ENCODE measurements at regions of chr17 and their contacts with region 1.

Region 1: DNA sequence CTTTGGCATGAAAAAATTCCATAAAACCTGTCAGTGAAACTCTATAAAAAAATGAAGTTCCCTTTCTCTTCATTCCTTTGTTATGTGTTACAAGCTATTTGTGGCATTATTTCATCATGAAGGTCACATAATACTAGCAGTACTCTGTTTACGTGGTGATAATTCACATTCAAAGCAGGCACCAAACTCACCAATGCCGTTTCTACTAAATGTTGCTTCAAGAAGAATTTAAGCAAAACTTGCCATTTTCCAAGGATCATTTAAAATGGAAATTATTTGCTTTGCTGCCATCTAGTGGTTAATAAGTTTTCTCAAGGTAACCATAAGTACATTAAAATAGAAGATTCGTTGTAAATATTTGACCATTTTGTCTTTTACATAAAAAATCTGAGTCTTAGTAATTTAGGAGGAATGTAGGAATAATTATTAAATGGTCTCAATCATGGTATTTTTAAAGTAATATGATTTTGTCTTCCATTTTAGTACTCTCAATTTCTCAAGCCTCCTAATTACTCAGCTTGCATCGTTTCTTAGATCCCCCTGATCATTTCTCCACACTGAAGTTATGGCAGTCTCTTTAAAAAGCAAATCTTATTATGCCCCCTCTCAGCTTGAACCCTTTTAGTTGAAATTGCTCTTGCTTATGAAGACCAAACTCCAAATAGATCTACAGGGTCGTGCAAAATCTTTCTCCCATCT is 80.8 kb downstream of the OMG start:
- H3K4me3 ChIP-seq: no peak overlapping the region
- H3K27ac ChIP-seq: no peak overlapping the region
- H3K4me1 ChIP-seq: no peaks in the 10 kb centered on the region
- CTCF ChIP-seq: no peak

Region 2: DNA sequence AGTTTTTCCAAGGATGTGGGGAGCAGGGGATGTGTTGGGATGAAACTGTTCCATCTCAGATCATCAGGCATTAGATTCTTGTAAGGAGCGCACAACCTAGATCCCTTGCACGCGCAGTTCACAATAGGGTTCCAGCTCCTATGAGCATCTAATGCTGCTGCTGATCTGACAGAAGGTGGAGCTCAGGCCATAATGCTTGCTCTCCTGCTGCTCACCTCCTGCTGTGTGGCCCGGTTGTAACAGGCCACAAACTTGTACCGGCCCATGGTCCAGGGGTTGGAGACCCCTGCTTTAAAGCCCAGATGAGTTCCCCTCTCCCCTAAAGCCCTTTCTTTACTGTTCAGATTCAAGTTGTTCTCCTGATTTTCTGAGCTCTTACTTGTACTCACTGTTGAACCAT is 200.6 kb before region 1 on chr17:
- CTCF ChIA-PET with region 1: interaction called, 24 read pairs
- POLR2A ChIA-PET with region 1: no interaction called
- H3K4me3 ChIP-seq: no peak overlapping the region
- H3K27ac ChIP-seq: no peak overlapping the region
- H3K4me1 ChIP-seq: no peaks in the 10 kb centered on the region
- CTCF ChIP-seq: no peak

Region 3: DNA sequence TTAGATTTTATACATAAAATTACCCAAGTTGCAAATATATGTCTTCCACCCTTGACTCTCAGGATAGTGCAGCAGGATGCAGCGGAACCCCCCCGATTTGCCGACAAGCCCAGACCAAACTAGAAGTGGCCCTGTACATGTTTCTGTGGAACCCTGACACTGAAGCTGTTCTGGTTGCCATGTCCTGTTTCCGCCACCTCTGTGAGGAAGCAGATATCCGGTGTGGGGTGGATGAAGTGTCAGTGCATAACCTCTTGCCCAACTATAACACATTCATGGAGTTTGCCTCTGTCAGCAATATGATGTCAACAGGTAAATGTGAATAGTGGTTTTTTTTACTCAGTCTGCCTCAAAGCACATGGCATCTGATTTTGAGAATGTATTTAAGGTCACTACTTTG is 10.2 kb after region 1 on chr17:
- CTCF ChIA-PET with region 1: interaction called, 16 read pairs
- POLR2A ChIA-PET with region 1: no interaction called
- H3K4me3 ChIP-seq: no peak overlapping the region
- H3K27ac ChIP-seq: no peak overlapping the region
- H3K4me1 ChIP-seq: peaks cover 5% of the 10 kb centered on the region
- CTCF ChIP-seq: no peak

Measured in HEK293 (cell line).